ENCODE measurements at regions of chr15 and their contacts with region 1.

Region 1: DNA sequence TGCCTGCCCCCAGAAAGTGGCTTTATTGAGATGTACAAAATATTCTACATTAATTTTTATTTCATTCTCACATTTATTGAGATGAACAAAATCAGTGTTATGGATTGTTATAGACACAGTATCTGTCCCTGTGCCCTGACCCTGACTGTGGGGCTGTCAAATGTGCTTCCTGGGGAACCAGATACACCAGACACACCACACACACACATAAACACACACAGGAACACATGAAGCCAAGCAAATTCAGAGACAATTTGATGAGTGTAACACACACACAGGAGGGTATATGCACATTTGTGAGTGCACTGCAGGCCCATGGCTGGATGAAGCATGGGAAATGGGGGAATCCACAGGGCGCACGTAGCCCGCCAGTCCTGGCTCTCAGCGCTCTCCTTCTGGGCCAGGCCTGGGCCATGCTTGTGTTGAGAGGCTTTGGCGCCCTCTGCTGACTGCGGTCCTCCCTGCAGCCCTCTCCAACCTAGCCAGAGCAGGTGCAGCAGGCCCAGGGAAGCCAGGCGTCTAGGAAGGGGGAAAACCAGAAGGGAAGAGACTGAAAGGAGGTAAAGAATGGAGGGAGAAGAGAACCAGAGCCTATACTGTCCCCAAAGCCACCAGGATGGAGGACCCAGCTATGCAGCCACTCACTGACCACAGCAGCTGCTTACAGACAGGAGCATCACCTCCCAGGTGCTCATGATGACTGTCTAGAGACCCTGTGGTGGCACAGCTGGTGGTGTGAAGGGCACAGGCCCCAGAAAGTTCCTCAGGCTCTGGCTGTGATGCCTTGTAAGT is 18.0 kb upstream of the LOXL1 start:
- DNase-seq: peak; percentile 91
- H3K4me3 Mint-ChIP-seq: no peak overlapping the region
- H3K27ac Mint-ChIP-seq: no peak overlapping the region
- H3K4me1 Mint-ChIP-seq: no peaks in the 10 kb centered on the region
- H3K27me3 Mint-ChIP-seq: peaks cover 87% of the 10 kb centered on the region
- CTCF ChIP-seq: peak; percentile 82

Region 2: DNA sequence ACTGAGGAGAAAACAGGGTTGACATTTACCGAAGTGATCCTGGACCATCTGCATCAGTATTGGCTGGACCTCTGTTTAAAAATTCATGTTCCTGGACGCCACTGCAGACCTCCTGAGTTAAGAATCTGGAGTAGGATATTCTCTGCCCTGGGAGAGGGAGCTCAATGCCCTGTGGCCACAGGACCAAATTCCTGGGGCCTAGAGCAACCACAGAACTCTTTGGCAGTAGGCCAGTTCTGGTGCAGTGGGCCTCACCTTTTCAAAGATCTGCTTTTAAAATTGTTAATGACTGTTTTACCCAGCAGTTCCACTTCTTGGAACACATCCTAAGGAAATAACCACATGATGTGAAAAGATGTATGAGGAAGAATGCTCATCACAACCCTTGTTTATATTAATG is 991.3 kb before region 1 on chr15:
- CTCF ChIA-PET with region 1: no interaction called
- intact Hi-C with region 1: no loop called
- DNase-seq: peak; percentile 41
- H3K4me3 Mint-ChIP-seq: no peak overlapping the region
- H3K27ac Mint-ChIP-seq: no peak overlapping the region
- H3K4me1 Mint-ChIP-seq: no peaks in the 10 kb centered on the region
- H3K27me3 Mint-ChIP-seq: peaks cover 17% of the 10 kb centered on the region
- CTCF ChIP-seq: no peak

Region 3: DNA sequence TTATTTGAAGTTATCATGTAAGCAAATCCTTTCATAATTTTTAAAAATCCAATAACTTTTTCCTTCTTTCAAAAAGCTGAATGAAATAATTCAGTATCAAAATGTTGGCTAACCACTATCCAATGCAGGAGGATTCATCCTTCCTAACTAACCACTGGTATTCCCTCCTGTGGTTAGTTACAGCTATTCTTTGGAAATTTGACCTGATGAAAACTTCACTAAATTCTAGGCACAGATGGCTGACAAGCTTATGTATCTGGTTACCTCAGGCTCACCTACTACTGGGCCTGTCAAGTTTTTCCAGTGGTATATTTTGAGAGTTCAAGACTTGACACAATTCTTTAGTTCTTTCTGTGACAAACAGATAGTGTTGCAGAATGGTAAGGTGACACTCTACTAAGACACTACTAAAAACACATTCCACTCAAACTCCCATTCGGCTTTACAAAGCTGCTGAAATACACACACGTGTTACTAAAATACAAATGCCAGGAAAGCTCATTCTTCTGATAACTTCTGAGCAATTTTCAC is 290.9 kb before region 1 on chr15:
- CTCF ChIA-PET with region 1: no interaction called
- intact Hi-C with region 1: no loop called
- DNase-seq: no peak
- H3K4me3 Mint-ChIP-seq: no peak overlapping the region
- H3K27ac Mint-ChIP-seq: no peak overlapping the region
- H3K4me1 Mint-ChIP-seq: no peaks in the 10 kb centered on the region
- H3K27me3 Mint-ChIP-seq: no peaks in the 10 kb centered on the region
- CTCF ChIP-seq: no peak

Region 4: DNA sequence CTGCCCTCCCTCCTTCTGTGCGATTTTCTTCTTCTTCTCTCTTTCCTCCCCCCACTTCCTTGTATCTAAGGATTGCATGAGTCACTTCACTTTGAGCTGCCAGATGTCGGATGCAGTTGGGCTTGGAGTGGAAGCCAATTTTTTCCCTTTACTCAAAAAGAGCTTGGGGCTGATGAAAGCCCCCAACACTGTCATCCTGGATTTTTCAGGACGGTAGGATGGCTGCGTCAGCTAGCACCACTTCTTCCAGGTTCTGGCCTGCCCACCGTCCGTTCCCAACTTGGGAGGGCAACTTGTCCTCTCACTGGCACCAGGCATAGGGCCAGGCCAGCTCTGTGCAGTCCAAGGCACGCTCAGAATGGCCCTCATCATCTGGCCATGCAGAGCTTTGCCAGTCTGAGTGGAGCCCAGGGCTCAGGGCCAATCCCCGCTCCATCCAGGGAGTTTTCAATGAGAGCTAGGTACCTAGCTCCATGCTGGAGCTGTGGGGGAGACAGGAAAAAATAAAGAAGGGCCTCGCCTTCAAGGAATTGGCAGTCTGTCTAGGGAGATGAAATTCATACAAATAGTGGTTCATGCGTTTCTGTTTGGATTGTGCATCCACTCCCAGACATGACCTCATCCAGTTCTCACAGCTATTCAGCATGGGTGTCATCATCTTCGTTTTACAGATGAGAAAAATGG is 107.4 kb before region 1 on chr15:
- CTCF ChIA-PET with region 1: interaction called, 3 read pairs
- intact Hi-C with region 1: loop called (anchors 10 kb)
- DNase-seq: no peak
- H3K4me3 Mint-ChIP-seq: no peak overlapping the region
- H3K27ac Mint-ChIP-seq: no peak overlapping the region
- H3K4me1 Mint-ChIP-seq: peaks cover 11% of the 10 kb centered on the region
- H3K27me3 Mint-ChIP-seq: peaks cover 55% of the 10 kb centered on the region
- CTCF ChIP-seq: no peak

Region 5: GRCh38 chr15:73873889-73874511 is 34.2 kb before region 1 on chr15:
- CTCF ChIA-PET with region 1: interaction called, 12 read pairs
- intact Hi-C with region 1: loop called (anchors 2 kb)
- DNase-seq: peak; percentile 41
- H3K4me3 Mint-ChIP-seq: no peak overlapping the region
- H3K27ac Mint-ChIP-seq: no peak overlapping the region
- H3K4me1 Mint-ChIP-seq: peaks cover 8% of the 10 kb centered on the region
- H3K27me3 Mint-ChIP-seq: peaks cover 100% of the 10 kb centered on the region
- CTCF ChIP-seq: peak; percentile 71